Heart left ventricle (tissue), 16 donors: ENCODE measurements at regions of chr13 and their contacts with region 1.

Region 1: DNA sequence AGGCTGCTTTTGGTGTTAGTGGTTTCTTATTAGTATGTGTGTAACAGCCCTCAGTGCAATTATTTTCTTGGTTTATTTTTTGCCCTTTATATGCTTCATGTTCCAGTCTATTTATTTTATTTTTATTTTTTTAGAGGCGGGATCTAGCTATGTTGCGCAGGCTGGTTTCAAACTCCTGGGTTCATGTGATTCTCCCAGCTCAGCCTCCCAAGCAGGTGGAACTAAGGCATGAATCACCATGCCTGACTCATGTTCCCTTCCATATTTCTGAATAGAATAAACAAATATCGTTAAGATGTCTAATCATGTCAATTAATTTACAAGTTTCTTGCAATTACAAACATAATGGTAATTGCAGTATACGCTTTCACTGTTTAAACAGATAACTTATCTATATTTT is 11.7 kb downstream of the SKA3 start:
- DNase-seq: no peak
- ATAC-seq: no peak
- H3K4me3 ChIP-seq: no peak overlapping the region
- H3K27ac ChIP-seq: no peak overlapping the region
- H3K4me1 ChIP-seq: no peaks in the 10 kb centered on the region
- H3K27me3 ChIP-seq: no peaks in the 10 kb centered on the region
- CTCF ChIP-seq: no peak
- POLR2A ChIP-seq: no peak

Region 2: DNA sequence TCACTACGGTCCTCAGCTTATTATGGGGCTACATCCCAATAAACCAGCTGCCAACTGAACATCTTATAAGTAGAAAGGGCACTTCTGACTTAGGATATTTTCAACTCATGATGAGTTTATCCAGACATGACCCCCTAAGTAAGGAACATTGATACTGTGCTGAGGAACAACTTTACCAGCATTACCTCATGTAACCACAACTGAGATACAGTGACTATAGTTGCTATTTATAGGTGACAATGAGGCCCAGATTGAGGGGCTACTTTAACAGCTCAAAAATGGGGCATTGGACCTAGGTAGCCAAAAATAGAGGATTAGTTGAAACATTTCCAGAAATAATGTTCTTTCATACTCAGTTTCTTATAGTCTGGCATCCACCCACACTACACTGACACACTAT is 15.1 kb before region 1 on chr13:
- intact Hi-C with region 1: loop called in 1 of 10 experiments (anchors 1 kb)
- DNase-seq: no peak
- ATAC-seq: peak; percentile 86 to 92 (median 91)
- H3K4me3 ChIP-seq: no peak overlapping the region
- H3K27ac ChIP-seq: peak overlapping the region in 9 of 12 donors; percentile 24 to 75 (median 47)
- H3K4me1 ChIP-seq: peaks cover 0 to 38% (median under 1%) of the 10 kb centered on the region in 12 donors
- H3K27me3 ChIP-seq: no peaks in the 10 kb centered on the region
- CTCF ChIP-seq: no peak
- POLR2A ChIP-seq: no peak

Region 3: GRCh38 chr13:21218351-21219035 is 53.9 kb after region 1 on chr13:
- intact Hi-C with region 1: no loop called
- DNase-seq: no peak
- ATAC-seq: no peak
- H3K4me3 ChIP-seq: no peak overlapping the region
- H3K27ac ChIP-seq: no peak overlapping the region
- H3K4me1 ChIP-seq: peaks cover 0 to 6% (median 0%) of the 10 kb centered on the region in 12 donors
- H3K27me3 ChIP-seq: peaks cover 0 to 4% (median 0%) of the 10 kb centered on the region in 9 donors
- CTCF ChIP-seq: no peak
- POLR2A ChIP-seq: no peak